ENCODE measurements at regions of chr7 and their contacts with region 1.

Region 1: GRCh38 chr7:44072364-44073231 is 7.2 kb upstream of the PGAM2 start:
- DNase-seq: no peak
- H3K4me3 ChIP-seq: peak overlapping the region in 1 of 2 donors; percentile 6
- H3K27ac ChIP-seq: peak overlapping the region; percentile 64
- H3K4me1 ChIP-seq: peaks cover 40% of the 10 kb centered on the region
- H3K27me3 ChIP-seq: no peaks in the 10 kb centered on the region
- CTCF ChIP-seq: peak; percentile 39 to 75 (median 55)
- POLR2A ChIP-seq: no peak

Region 2: DNA sequence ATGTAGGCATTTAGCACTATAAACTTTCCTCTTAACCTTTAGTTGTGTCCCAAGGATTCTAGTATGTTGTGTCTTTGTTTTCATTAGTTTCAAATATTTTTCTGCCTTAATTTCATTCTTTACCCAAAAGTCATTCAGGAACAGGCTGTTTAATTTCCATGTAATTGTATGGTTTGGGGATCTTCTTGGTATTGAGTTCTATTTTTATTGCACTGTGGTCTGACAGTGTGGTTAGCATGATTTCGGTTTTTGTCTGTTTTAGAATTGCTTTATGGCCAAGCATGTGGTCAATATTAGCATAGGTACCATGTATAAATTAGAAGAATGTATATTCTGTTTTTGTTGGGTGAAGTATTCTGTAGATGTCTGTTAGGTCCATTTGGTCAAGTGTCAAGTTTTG is 369.6 kb before region 1 on chr7:
- intact Hi-C with region 1: no loop called
- DNase-seq: no peak
- H3K4me3 ChIP-seq: no peak overlapping the region
- H3K27ac ChIP-seq: no peak overlapping the region
- H3K4me1 ChIP-seq: peaks cover 7% of the 10 kb centered on the region
- H3K27me3 ChIP-seq: no peaks in the 10 kb centered on the region
- CTCF ChIP-seq: no peak
- POLR2A ChIP-seq: no peak

Region 3: GRCh38 chr7:44196450-44196872 is 123.9 kb after region 1 on chr7:
- intact Hi-C with region 1: loop called (anchors 10 kb)
- DNase-seq: no peak
- H3K4me3 ChIP-seq: no peak overlapping the region
- H3K27ac ChIP-seq: no peak overlapping the region
- H3K4me1 ChIP-seq: peaks cover 2% of the 10 kb centered on the region
- H3K27me3 ChIP-seq: no peaks in the 10 kb centered on the region
- CTCF ChIP-seq: peak in 1 of 3 experiments; percentile 71
- POLR2A ChIP-seq: no peak